Activated CD4-positive, alpha-beta memory T cell treated with anti-CD3 and anti-CD28 coated beads for 36 hours (primary cell): ENCODE measurements at regions of chr19 and their contacts with region 1.

Region 1: DNA sequence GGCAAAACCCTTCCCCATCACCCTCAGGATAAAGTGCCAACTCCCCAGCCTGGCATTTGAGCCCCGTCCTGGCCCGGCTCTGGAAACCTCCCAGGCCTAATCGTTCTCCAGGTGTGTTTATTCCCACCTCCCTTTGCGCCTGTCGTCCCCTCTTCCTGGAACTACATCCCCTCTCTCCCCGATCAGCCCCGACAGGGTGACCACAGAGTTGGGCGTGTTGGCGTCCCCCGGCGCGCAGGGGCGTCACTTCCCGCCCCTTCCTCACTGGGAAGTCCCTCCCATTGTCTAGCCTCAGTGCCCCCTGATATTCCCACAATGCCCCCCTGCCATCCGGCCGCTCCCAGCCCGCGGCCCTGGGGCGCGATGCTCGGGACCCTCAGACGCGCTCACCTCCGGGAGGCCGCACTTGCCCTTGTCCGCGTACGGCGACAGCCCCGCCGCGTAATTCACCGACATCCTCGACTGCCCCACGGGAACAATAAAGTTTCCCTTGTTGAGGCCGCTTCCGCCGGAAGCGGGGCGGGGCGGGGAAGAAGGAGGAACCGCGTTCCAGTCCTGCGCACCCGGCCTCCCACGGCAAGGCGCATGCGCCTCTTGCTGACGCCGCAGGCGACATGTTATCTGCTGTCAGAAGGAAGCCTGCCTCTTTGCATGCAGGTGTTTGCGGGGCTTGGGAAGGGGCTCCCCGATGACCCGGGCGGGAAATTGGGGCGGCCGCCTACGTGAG is at the starts of genes ANKRD24 and SIRT6:
- DNase-seq: peak; percentile 98
- H3K4me3 Mint-ChIP-seq: peak within 1 kb of the TSS; percentile 96
- H3K27ac Mint-ChIP-seq: peak within 1 kb of the TSS; percentile 92
- H3K4me1 Mint-ChIP-seq: peaks cover 29% of the 10 kb centered on the region
- H3K27me3 Mint-ChIP-seq: no peaks in the 10 kb centered on the region
- total RNA-seq, gene ANKRD24: 1.7 to 1.8 TPM
- total RNA-seq, gene SIRT6: 28.0 to 29.7 TPM

Region 2: GRCh38 chr19:3970808-3971598 is 211.2 kb before region 1 on chr19 and contains the start of gene DAPK3:
- CTCF ChIA-PET with region 1: no interaction called
- POLR2A ChIA-PET with region 1: no interaction called
- intact Hi-C with region 1: loop called (anchors 5 kb)
- DNase-seq: peak; percentile 97
- H3K4me3 Mint-ChIP-seq: peak within 1 kb of the TSS; percentile 85
- H3K27ac Mint-ChIP-seq: peak within 1 kb of the TSS; percentile 49
- H3K4me1 Mint-ChIP-seq: peaks cover 17% of the 10 kb centered on the region
- H3K27me3 Mint-ChIP-seq: no peaks in the 10 kb centered on the region
- total RNA-seq, gene DAPK3: 32.4 to 33.3 TPM

Region 3: GRCh38 chr19:4123615-4124568 is 58.4 kb before region 1 on chr19 and contains the start of gene MAP2K2:
- CTCF ChIA-PET with region 1: interaction called, 3 read pairs
- POLR2A ChIA-PET with region 1: no interaction called
- intact Hi-C with region 1: loop called (anchors 10 kb)
- DNase-seq: peak; percentile 97
- H3K4me3 Mint-ChIP-seq: peak within 1 kb of the TSS; percentile 86
- H3K27ac Mint-ChIP-seq: peak within 1 kb of the TSS; percentile 82
- H3K4me1 Mint-ChIP-seq: peaks cover 21% of the 10 kb centered on the region
- H3K27me3 Mint-ChIP-seq: no peaks in the 10 kb centered on the region
- total RNA-seq, gene MAP2K2: 128 to 129 TPM

Region 4: GRCh38 chr19:4304530-4305252 is 122.4 kb after region 1 on chr19 and contains the start of gene FSD1:
- CTCF ChIA-PET with region 1: no interaction called
- POLR2A ChIA-PET with region 1: no interaction called
- intact Hi-C with region 1: no loop called
- DNase-seq: peak; percentile 81
- H3K4me3 Mint-ChIP-seq: peak within 1 kb of the TSS; percentile 50
- H3K27ac Mint-ChIP-seq: no peak within 1 kb of the TSS
- H3K4me1 Mint-ChIP-seq: peaks cover 28% of the 10 kb centered on the region
- H3K27me3 Mint-ChIP-seq: no peaks in the 10 kb centered on the region
- total RNA-seq, gene FSD1: 7.8 to 8.1 TPM